Activated CD4-positive, alpha-beta memory T cell treated with anti-CD3 and anti-CD28 coated beads, Interleukin-2, amount 10 ng/mL, durations not matched to agents 7 days and 5 days (primary cell): ENCODE measurements at regions of chr14 and their contacts with region 1.

Region 1: DNA sequence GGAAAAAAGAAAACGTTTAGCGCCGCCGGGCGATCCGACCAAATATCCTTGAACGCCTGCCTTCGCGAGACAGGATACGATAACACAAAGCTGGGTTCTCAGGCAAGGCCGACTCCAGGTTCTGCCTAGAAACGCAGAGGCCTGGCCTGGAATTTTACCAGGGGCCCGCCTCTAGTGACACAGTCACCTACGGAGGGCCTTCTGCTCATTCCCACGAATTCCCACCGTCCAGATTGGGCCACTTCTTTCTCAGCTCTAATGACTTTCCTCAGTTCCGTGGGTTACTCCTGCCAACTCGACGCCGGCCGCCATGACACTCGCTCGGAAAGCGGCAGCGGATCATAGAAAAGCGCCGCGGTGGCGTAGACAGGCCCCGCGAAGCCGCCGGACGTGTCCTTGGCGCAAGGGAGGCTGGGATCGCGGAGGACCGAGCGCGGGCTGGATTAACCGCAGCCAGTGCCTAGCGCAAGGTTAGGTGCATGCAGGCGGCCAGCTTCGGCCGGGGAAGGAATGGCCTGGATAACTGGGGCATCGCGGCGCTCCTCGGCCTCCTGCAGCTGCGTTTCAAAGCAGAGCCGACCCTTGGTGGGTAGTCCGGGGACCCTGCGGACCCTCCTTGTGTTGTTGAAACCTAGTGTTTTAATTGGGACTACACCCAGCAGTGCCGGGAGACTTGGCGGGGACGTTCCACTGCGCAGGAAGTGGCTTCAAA is at the start of gene TRIP11:
- DNase-seq: peak; percentile 98
- H3K4me3 Mint-ChIP-seq: peak within 1 kb of the TSS; percentile 89
- H3K27ac Mint-ChIP-seq: peak within 1 kb of the TSS; percentile 95
- H3K4me1 Mint-ChIP-seq: peaks cover 46% of the 10 kb centered on the region
- H3K27me3 Mint-ChIP-seq: no peaks in the 10 kb centered on the region
- total RNA-seq, gene TRIP11: 44.4 to 46.0 TPM

Region 2: GRCh38 chr14:91901449-91902226 is 138.2 kb before region 1 on chr14:
- CTCF ChIA-PET with region 1: no interaction called
- POLR2A ChIA-PET with region 1: no interaction called
- DNase-seq: no peak
- H3K4me3 Mint-ChIP-seq: no peak overlapping the region
- H3K27ac Mint-ChIP-seq: no peak overlapping the region
- H3K4me1 Mint-ChIP-seq: no peaks in the 10 kb centered on the region
- H3K27me3 Mint-ChIP-seq: peaks cover 3% of the 10 kb centered on the region

Region 3: DNA sequence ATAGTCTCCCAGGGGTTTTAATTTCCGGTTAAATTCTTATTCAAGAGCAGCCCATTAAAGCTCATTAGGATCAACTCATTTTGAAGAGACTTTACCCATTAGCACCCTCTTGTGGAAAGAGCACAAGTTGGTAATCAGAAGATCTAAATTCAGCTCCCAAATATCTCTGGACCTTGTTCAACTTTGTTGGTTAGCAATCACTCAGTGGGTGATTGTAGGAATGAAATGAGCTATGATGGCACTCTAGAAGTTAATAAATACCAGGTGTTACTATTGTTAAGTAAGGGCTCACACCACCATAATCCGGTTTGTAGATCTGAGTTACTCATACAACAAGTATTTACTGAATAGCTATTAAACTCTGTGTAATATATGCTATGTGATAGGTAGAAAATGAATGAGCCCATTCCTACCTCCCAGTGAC is 42.9 kb before region 1 on chr14:
- CTCF ChIA-PET with region 1: interaction called, 8 read pairs
- POLR2A ChIA-PET with region 1: interaction called, 17 read pairs
- DNase-seq: no peak
- H3K4me3 Mint-ChIP-seq: no peak overlapping the region
- H3K27ac Mint-ChIP-seq: no peak overlapping the region
- H3K4me1 Mint-ChIP-seq: peaks cover 38% of the 10 kb centered on the region
- H3K27me3 Mint-ChIP-seq: no peaks in the 10 kb centered on the region

Region 4: DNA sequence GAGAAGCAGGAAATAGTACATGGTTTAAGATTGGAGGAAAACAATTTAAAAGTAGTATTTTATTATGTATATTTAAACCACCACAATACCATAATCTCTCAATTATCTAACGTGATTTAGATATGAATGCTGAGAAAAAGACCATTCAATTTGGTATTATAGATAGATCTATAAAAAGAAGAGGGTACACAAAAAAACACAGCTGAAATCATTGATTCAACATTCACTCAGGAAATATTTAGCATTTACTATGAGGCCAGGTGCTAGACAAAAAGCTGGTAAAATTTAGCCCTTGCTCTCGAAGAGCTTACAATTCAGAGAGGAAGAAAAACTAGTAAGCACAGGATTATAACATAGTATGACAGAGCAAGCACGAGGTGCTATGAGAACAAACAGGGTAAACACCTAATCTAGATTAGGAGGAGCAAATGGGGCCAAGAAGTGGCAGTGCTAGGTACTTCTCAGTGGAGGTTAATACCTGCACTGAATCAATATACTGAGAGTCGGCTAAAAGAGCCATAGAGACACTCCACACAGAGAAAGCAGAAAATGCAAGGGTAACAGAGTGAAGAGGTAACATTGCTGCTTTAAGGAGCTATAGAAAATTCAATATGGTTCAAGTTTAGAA is 27.6 kb before region 1 on chr14:
- CTCF ChIA-PET with region 1: interaction called, 3 read pairs
- POLR2A ChIA-PET with region 1: interaction called, 15 read pairs
- DNase-seq: no peak
- H3K4me3 Mint-ChIP-seq: no peak overlapping the region
- H3K27ac Mint-ChIP-seq: peak overlapping the region; percentile 14
- H3K4me1 Mint-ChIP-seq: peaks cover 25% of the 10 kb centered on the region
- H3K27me3 Mint-ChIP-seq: no peaks in the 10 kb centered on the region

Region 5: DNA sequence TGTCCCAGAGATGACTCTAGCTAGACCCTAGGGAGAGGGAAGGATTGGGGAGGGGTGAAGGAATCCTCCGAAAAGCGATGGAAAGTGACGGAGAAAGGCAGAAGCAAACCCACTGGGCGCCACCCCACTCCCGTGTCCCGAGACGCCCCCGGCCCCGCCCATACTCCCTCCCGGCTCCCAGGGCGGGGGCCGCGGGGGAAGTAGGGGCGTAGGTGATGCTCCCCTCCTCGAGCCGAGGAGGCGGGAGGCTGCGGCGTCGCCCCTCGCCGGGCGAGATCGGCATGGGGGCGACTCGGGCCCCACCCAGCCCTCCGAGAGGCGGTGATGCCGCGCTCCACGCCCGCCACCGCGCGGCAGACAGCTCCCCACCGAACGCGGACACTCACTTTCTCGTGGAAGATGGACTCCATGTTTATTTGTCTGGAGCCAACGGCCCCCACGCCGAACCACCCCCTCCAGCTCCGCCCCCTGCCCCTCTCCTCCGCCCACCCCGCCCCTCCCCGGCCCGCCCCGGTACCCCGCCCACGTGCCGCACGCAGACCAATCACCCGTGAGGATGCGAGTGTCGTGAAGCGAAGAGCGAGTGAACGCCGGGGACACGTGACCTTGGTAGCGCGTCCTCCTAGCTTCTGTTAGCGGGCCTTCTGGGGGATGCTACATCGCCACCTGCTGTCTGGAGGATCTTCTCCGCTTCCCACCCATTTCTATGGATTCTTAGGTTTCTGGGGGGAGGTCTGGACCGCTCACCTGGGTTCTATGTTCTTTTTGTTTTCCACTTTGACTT is 66.5 kb after region 1 on chr14 and contains the start of gene ATXN3:
- CTCF ChIA-PET with region 1: interaction called, 28 read pairs
- POLR2A ChIA-PET with region 1: interaction called, 59 read pairs
- DNase-seq: peak; percentile 96
- H3K4me3 Mint-ChIP-seq: peak within 1 kb of the TSS; percentile 93
- H3K27ac Mint-ChIP-seq: peak within 1 kb of the TSS; percentile 92
- H3K4me1 Mint-ChIP-seq: peaks cover 38% of the 10 kb centered on the region
- H3K27me3 Mint-ChIP-seq: no peaks in the 10 kb centered on the region
- total RNA-seq, gene ATXN3: 29.3 to 30.5 TPM